A673 (cell line): ENCODE measurements at regions of chr3 and their contacts with region 1.

Region 1: DNA sequence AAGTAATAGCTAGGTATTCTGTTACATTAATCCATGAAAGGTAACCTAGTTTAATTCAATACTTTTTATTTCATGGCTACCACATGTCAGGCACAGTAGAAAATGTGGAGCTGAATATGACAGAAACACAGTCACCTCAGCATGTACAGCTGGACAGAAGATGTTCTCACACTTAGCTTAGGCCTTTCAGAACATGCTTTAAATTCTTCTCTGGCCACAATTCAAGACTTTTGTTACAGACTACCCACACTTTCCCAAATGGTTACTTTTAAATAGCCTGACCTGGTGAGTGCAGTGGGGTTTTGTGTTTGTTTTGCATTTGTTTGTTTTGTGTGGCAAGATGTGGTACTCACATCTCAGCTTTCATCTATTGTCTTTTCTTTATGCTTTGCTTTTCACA is 1079.5 kb downstream of the IGSF11 start:
- DNase-seq: no peak
- H3K4me3 ChIP-seq: no peak overlapping the region
- H3K27ac ChIP-seq: no peak overlapping the region
- H3K4me1 ChIP-seq: no peaks in the 10 kb centered on the region
- H3K27me3 ChIP-seq: no peaks in the 10 kb centered on the region
- CTCF ChIP-seq: no peak

Region 2: GRCh38 chr3:117873249-117873600 is 82.0 kb before region 1 on chr3:
- CTCF ChIA-PET with region 1: no interaction called
- POLR2A ChIA-PET with region 1: no interaction called
- intact Hi-C with region 1: no loop called
- DNase-seq: no peak
- H3K4me3 ChIP-seq: no peak overlapping the region
- H3K27ac ChIP-seq: no peak overlapping the region
- H3K4me1 ChIP-seq: peaks cover 14% of the 10 kb centered on the region
- H3K27me3 ChIP-seq: no peaks in the 10 kb centered on the region
- CTCF ChIP-seq: no peak

Region 3: DNA sequence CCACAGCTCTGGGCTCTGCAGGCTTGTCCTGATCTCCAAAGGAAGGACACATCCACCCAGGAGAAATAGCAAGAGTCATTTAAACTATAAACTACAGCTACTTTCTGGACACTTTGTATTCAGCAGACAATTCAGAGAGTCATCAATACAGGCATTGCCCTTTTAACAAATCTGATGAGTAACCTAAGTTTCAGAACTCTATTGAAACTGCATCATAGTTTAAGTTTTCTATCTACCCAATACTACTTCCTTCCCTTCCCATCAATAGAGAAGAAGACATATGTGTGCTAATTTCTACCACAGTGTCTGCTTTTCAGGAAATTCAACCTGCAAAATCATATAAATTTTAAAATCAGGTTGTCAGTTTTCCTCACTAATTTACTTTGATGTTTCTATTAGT is 342.9 kb after region 1 on chr3:
- CTCF ChIA-PET with region 1: no interaction called
- POLR2A ChIA-PET with region 1: no interaction called
- intact Hi-C with region 1: no loop called
- DNase-seq: no peak
- H3K4me3 ChIP-seq: no peak overlapping the region
- H3K27ac ChIP-seq: no peak overlapping the region
- H3K4me1 ChIP-seq: no peaks in the 10 kb centered on the region
- H3K27me3 ChIP-seq: no peaks in the 10 kb centered on the region
- CTCF ChIP-seq: no peak

Region 4: DNA sequence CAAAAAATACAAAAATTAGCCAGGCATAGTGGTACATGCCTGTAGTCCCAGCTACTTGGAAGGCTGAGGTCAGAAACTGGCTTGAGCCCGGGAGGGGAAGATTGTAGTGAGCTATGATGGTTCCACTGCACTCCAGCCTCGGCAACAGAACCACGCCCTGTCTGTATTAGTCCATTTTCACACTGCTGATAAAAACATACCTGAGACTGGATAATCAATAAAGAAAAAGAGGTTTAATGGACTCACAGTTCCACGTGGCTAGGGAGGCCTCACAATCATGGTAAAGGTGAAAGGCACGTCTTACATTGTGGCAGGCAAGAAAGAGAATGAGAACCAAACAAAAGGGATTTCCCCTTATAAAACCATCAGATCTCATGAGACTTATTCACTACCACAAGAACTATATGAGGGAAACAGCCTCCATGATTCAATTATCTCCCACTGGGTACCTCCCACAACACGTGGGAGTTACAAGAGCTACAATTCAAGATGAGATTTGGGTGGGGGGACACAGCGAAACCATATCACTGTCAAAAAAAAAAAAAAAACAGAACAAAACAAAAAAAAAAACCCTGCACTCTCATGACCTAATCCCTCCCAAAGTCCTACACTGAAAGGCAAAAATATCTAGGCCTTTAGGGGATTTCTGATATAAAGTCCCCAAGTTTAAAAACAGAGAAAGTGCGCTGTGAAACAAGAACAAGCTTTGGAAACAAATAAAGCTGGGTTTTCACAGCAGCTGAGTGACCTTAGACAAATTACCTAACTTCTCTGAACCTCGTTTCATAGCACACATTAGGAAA is 854.7 kb after region 1 on chr3:
- CTCF ChIA-PET with region 1: interaction called, 10 read pairs
- POLR2A ChIA-PET with region 1: no interaction called
- intact Hi-C with region 1: no loop called
- DNase-seq: no peak
- H3K4me3 ChIP-seq: no peak overlapping the region
- H3K27ac ChIP-seq: no peak overlapping the region
- H3K4me1 ChIP-seq: no peaks in the 10 kb centered on the region
- H3K27me3 ChIP-seq: no peaks in the 10 kb centered on the region
- CTCF ChIP-seq: no peak

Region 5: GRCh38 chr3:119149484-119149883 is 1194.3 kb after region 1 on chr3:
- CTCF ChIA-PET with region 1: no interaction called
- POLR2A ChIA-PET with region 1: no interaction called
- intact Hi-C with region 1: no loop called
- DNase-seq: no peak
- H3K4me3 ChIP-seq: no peak overlapping the region
- H3K27ac ChIP-seq: no peak overlapping the region
- H3K4me1 ChIP-seq: no peaks in the 10 kb centered on the region
- H3K27me3 ChIP-seq: no peaks in the 10 kb centered on the region
- CTCF ChIP-seq: no peak